Activated naive CD4-positive, alpha-beta T cell treated with anti-CD3 and anti-CD28 coated beads for 36 hours (primary cell): ENCODE measurements at regions of chr10 and their contacts with region 1.

Region 1: GRCh38 chr10:55091691-55092328 is 290.8 kb upstream of the PCDH15 start:
- DNase-seq: no peak
- H3K4me3 Mint-ChIP-seq: no peak overlapping the region
- H3K27ac Mint-ChIP-seq: no peak overlapping the region
- H3K4me1 Mint-ChIP-seq: no peaks in the 10 kb centered on the region
- H3K27me3 Mint-ChIP-seq: no peaks in the 10 kb centered on the region

Region 2: GRCh38 chr10:55500932-55501559 is 409.2 kb after region 1 on chr10:
- CTCF ChIA-PET with region 1: no interaction called
- intact Hi-C with region 1: loop called (anchors 10 kb)
- DNase-seq: peak; percentile 7
- H3K4me3 Mint-ChIP-seq: no peak overlapping the region
- H3K27ac Mint-ChIP-seq: no peak overlapping the region
- H3K4me1 Mint-ChIP-seq: no peaks in the 10 kb centered on the region
- H3K27me3 Mint-ChIP-seq: no peaks in the 10 kb centered on the region

Region 3: GRCh38 chr10:55742487-55742886 is 650.7 kb after region 1 on chr10:
- CTCF ChIA-PET with region 1: no interaction called
- intact Hi-C with region 1: loop called (anchors 5 kb)
- DNase-seq: no peak
- H3K4me3 Mint-ChIP-seq: no peak overlapping the region
- H3K27ac Mint-ChIP-seq: no peak overlapping the region
- H3K4me1 Mint-ChIP-seq: no peaks in the 10 kb centered on the region
- H3K27me3 Mint-ChIP-seq: no peaks in the 10 kb centered on the region